ENCODE measurements at regions of chr3 and their contacts with region 1.

Region 1: DNA sequence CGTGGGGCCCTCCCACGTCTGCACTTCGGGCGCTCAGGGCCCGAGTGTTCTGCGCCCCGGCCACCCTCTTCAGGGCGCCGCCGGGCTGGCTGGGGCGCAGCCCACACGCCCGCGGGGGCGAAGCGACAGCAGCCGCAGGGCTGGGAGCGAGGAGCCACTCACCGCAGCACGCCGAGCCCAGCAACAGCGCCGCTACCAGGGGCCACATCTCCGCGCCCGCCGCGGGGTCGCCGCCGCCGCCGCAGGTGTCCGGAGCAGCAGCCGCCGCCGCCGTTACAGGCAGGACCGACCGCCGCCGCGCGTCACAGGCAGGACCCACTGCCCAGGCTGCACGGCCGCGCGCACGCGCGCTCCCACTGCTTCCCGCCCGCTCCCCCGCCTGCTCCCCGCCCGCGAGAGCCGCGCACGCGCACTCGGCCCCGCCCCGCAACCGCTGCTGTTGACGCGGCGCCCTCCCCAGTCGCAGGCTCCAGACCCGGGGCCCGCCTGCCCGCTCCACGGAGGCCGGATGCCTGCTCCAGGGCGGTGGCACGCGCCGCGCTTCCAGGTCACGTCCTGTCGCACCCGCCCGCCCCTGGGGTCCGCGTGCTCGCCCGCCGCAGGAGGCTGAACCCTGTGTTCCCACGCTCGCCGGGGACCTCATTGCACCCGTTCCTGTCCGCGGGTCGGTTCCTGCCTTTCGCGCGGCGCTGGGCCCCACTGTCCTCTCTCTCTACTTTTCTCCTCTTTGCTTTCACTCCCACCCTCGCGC is at the start of gene CD47:
- DNase-seq: peak; percentile 96 to 98
- ATAC-seq: peak; percentile 68 to 86 (median 75)
- H3K4me3 ChIP-seq: peak within 1 kb of the TSS; percentile 93
- H3K4me3 Mint-ChIP-seq: peak within 1 kb of the TSS; percentile 96
- H3K27ac ChIP-seq: peak within 1 kb of the TSS; percentile 99
- H3K27ac Mint-ChIP-seq: no peak within 1 kb of the TSS
- H3K4me1 ChIP-seq: peaks cover 23% of the 10 kb centered on the region
- H3K4me1 Mint-ChIP-seq: peaks cover 27 to 49% of the 10 kb centered on the region in 2 donors
- H3K27me3 ChIP-seq: no peaks in the 10 kb centered on the region
- H3K27me3 Mint-ChIP-seq: peaks cover 0 to 2% of the 10 kb centered on the region in 2 donors
- CTCF ChIP-seq: no peak
- total RNA-seq, gene CD47: 226 to 236 (median 233) TPM

Region 2: GRCh38 chr3:107938143-107938542 is 152.7 kb before region 1 on chr3:
- intact Hi-C with region 1: loop called (anchors 10 kb)
- DNase-seq: peak in 1 of 2 donors; percentile 44
- ATAC-seq: no peak
- H3K4me3 ChIP-seq: no peak overlapping the region
- H3K4me3 Mint-ChIP-seq: no peak overlapping the region
- H3K27ac ChIP-seq: no peak overlapping the region
- H3K27ac Mint-ChIP-seq: no peak overlapping the region
- H3K4me1 ChIP-seq: peaks cover 5% of the 10 kb centered on the region
- H3K4me1 Mint-ChIP-seq: peaks cover 10 to 22% of the 10 kb centered on the region in 2 donors
- H3K27me3 ChIP-seq: no peaks in the 10 kb centered on the region
- H3K27me3 Mint-ChIP-seq: peaks cover 6 to 25% of the 10 kb centered on the region in 2 donors
- CTCF ChIP-seq: peak; percentile 28

Region 3: GRCh38 chr3:107954845-107955244 is 136.0 kb before region 1 on chr3:
- intact Hi-C with region 1: no loop called
- DNase-seq: peak in 1 of 2 donors; percentile 30
- ATAC-seq: peak in 2 of 3 donors; percentile 59 to 66
- H3K4me3 ChIP-seq: no peak overlapping the region
- H3K4me3 Mint-ChIP-seq: peak overlapping the region; percentile 17
- H3K27ac ChIP-seq: no peak overlapping the region
- H3K27ac Mint-ChIP-seq: peak overlapping the region in 1 of 2 donors; percentile 6
- H3K4me1 ChIP-seq: peaks cover 13% of the 10 kb centered on the region
- H3K4me1 Mint-ChIP-seq: peaks cover 26 to 28% of the 10 kb centered on the region in 2 donors
- H3K27me3 ChIP-seq: no peaks in the 10 kb centered on the region
- H3K27me3 Mint-ChIP-seq: no peaks in the 10 kb centered on the region
- CTCF ChIP-seq: no peak

Region 4: DNA sequence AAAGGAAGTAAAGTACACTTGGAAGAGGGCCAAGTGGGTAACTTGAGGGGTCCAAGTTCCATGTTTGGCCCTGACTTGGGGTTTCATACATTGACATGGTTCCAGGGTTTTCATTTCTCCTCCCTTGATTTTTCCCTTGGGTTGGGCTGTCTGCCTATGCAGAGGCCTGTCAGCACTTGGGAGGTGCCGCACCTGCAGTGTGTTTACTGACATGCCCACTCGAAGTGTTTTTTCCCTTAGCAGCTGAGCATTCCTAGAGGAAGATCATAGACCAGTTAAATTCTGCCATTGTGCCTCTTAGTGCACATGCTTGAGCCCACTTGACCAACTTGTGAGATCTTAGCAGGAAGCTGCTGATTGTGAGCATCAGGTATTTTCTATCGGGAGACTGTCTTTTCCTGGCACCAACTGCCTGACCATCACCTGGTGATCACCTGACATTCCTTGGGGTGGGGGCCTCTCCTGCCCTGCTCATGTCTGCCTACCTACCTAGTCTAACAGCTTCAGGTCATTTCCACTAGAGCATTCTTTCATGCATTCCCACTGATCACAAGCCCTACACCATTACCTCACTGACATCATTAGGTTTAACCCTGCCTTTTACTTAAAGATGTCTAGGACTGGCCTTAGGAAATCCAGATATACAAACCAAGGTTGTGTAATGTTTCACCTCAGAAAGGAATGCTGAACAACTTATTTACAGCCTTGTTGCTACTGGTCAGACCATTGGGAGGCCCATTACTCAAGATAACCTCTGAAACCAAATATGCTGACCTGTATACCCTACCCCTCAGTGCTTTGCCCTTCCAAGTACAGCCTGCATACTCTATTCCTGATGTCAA is 68.4 kb before region 1 on chr3:
- intact Hi-C with region 1: no loop called
- DNase-seq: no peak
- ATAC-seq: no peak
- H3K4me3 ChIP-seq: no peak overlapping the region
- H3K4me3 Mint-ChIP-seq: no peak overlapping the region
- H3K27ac ChIP-seq: no peak overlapping the region
- H3K27ac Mint-ChIP-seq: peak overlapping the region in 1 of 2 donors; percentile 35
- H3K4me1 ChIP-seq: no peaks in the 10 kb centered on the region
- H3K4me1 Mint-ChIP-seq: peaks cover 23 to 40% of the 10 kb centered on the region in 2 donors
- H3K27me3 ChIP-seq: no peaks in the 10 kb centered on the region
- H3K27me3 Mint-ChIP-seq: peaks cover 8 to 20% of the 10 kb centered on the region in 2 donors
- CTCF ChIP-seq: no peak

Region 5: DNA sequence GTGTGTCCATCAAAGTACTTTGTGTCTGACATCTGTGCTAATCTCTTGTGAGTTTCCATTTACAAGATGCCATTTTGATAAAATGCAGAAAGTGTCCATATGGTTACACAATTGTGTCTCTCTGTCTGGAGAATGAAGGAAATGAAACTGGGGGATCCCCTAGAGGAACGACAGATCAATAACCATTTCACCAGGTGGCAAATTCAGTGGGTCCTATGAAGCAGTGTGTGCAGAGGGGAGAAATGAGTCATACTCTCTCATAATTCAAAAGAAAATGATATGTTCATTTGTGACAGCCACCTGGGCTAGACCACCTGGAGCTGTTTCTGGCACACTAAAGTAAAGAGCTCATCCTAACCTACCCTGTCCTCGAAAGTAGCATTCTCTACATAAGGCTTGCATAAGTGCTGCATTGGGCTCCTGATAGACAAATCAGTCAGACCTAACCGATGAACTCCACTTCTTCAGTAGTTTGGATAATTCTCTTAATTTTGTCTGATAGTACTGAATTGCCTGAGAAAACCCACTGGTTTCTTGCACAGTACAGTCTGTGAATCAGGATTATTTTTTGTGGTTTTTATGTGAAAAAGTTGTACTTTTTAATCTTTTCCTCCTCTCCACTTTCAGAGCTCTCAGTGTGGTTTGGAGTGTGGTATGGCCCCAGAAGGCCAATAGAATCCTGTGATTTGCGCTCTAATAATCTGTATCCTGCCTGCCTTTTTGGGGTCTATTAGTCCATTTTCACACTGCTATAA is 10.2 kb after region 1 on chr3:
- intact Hi-C with region 1: loop called (anchors 1 kb)
- DNase-seq: peak in 1 of 2 donors; percentile 68
- ATAC-seq: peak; percentile 26 to 33 (median 28)
- H3K4me3 ChIP-seq: no peak overlapping the region
- H3K4me3 Mint-ChIP-seq: peak overlapping the region; percentile 75
- H3K27ac ChIP-seq: peak overlapping the region; percentile 69
- H3K27ac Mint-ChIP-seq: peak overlapping the region; percentile 88 to 97
- H3K4me1 ChIP-seq: peaks cover 72% of the 10 kb centered on the region
- H3K4me1 Mint-ChIP-seq: peaks cover 77 to 81% of the 10 kb centered on the region in 2 donors
- H3K27me3 ChIP-seq: no peaks in the 10 kb centered on the region
- H3K27me3 Mint-ChIP-seq: no peaks in the 10 kb centered on the region
- CTCF ChIP-seq: no peak

Region 6: GRCh38 chr3:108124337-108125152 is 33.7 kb after region 1 on chr3:
- intact Hi-C with region 1: loop called (anchors 1 kb)
- DNase-seq: peak; percentile 32 to 89
- ATAC-seq: peak; percentile 63 to 78 (median 63)
- H3K4me3 ChIP-seq: peak overlapping the region; percentile 42
- H3K4me3 Mint-ChIP-seq: peak overlapping the region; percentile 79
- H3K27ac ChIP-seq: peak overlapping the region; percentile 97
- H3K27ac Mint-ChIP-seq: peak overlapping the region; percentile 93 to 97
- H3K4me1 ChIP-seq: peaks cover 60% of the 10 kb centered on the region
- H3K4me1 Mint-ChIP-seq: peaks cover 61 to 63% of the 10 kb centered on the region in 2 donors
- H3K27me3 ChIP-seq: no peaks in the 10 kb centered on the region
- H3K27me3 Mint-ChIP-seq: no peaks in the 10 kb centered on the region
- CTCF ChIP-seq: no peak

Region 7: DNA sequence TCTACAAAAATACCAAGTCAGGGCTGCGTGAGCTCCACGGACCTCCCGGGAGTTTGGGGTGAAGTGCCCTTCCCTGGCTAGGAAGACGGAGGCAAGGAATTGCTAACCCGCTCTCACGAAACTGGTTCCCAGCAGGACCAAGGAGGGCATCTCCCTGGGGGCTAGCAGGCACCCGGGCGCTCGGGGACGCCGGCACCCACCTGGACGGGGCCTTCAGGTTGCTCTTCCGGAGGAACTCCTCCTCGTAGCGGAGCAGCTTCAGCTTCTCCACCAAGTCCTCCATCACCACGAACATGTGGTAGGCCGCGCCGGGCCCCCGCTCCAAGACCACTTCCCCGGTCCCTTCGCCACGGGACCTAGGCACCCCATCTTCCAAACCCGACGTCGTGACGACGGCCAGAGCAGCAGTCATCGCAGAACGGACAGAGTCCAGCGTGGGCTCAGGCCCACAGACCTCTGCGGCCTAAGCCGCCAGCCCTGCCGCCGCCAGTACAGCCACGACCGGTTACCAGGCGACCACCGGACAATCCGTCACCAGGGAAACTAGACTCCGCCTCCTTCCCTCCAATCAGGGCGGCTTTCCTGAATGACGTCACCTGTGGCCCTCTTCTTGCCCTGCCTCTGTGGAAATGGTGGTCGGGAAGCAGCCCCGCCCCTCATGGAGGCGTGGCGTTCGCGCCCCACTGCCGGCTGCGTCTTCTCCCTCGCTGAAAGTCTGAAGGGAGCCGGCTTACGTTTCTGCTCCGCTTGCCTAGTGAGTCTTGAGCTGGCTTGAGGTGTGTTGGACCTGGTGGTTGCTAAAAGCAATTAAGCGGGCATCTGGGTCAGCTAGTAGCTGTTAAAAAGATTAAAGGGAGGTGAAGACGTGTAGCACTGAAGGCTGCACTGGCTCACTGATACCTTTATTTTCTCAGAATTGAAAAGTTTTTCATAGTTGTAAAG is 131.3 kb after region 1 on chr3 and contains the start of gene IFT57:
- intact Hi-C with region 1: loop called (anchors 1 kb)
- DNase-seq: peak; percentile 94 to 99
- ATAC-seq: peak; percentile 93 to 98 (median 95)
- H3K4me3 ChIP-seq: peak within 1 kb of the TSS; percentile 86
- H3K4me3 Mint-ChIP-seq: peak within 1 kb of the TSS; percentile 97
- H3K27ac ChIP-seq: peak within 1 kb of the TSS; percentile 91
- H3K27ac Mint-ChIP-seq: peak within 1 kb of the TSS; percentile 99 to 100
- H3K4me1 ChIP-seq: peaks cover 11% of the 10 kb centered on the region
- H3K4me1 Mint-ChIP-seq: peaks cover 39 to 50% of the 10 kb centered on the region in 2 donors
- H3K27me3 ChIP-seq: no peaks in the 10 kb centered on the region
- H3K27me3 Mint-ChIP-seq: no peaks in the 10 kb centered on the region
- CTCF ChIP-seq: no peak
- total RNA-seq, gene IFT57: 22.2 to 49.3 (median 33.5) TPM

Region 8: GRCh38 chr3:108589146-108589997 is 498.5 kb after region 1 on chr3 and contains the starts of genes CIP2A and DZIP3:
- intact Hi-C with region 1: loop called (anchors 10 kb)
- DNase-seq: peak; percentile 84 to 95
- ATAC-seq: peak; percentile 77 to 91 (median 80)
- H3K4me3 ChIP-seq: peak within 1 kb of the TSS; percentile 95
- H3K4me3 Mint-ChIP-seq: peak within 1 kb of the TSS; percentile 97
- H3K27ac ChIP-seq: peak within 1 kb of the TSS; percentile 98
- H3K27ac Mint-ChIP-seq: peak within 1 kb of the TSS; percentile 95 to 99
- H3K4me1 ChIP-seq: peaks cover 8% of the 10 kb centered on the region
- H3K4me1 Mint-ChIP-seq: peaks cover 28 to 34% of the 10 kb centered on the region in 2 donors
- H3K27me3 ChIP-seq: no peaks in the 10 kb centered on the region
- H3K27me3 Mint-ChIP-seq: no peaks in the 10 kb centered on the region
- CTCF ChIP-seq: no peak
- total RNA-seq, gene CIP2A: 3.6 to 8.5 (median 3.6) TPM
- total RNA-seq, gene DZIP3: 12.0 to 24.8 (median 20.8) TPM